ENCODE measurements at regions of chr14 and their contacts with region 1.

Region 1: GRCh38 chr14:22131749-22132476 is 457.1 kb downstream of the DAD1 start:
- DNase-seq: peak in 1 of 2 experiments; percentile 78
- H3K4me3 ChIP-seq: no peak overlapping the region
- H3K27ac ChIP-seq: no peak overlapping the region
- H3K4me1 ChIP-seq: no peaks in the 10 kb centered on the region
- H3K27me3 ChIP-seq: no peaks in the 10 kb centered on the region
- CTCF ChIP-seq: peak; percentile 41 to 73 (median 55)
- EP300 ChIP-seq: no peak
- POLR2A ChIP-seq: no peak
- RAD21 ChIP-seq: peak; percentile 30 to 46; a peak in 3 of 4 replicates

Region 2: GRCh38 chr14:22147704-22148103 is 15.8 kb after region 1 on chr14:
- CTCF ChIA-PET with region 1: interaction called, 15 read pairs
- POLR2A ChIA-PET with region 1: no interaction called
- DNase-seq: no peak
- H3K4me3 ChIP-seq: no peak overlapping the region
- H3K27ac ChIP-seq: no peak overlapping the region
- H3K4me1 ChIP-seq: no peaks in the 10 kb centered on the region
- H3K27me3 ChIP-seq: no peaks in the 10 kb centered on the region
- CTCF ChIP-seq: no peak
- EP300 ChIP-seq: no peak
- POLR2A ChIP-seq: no peak
- RAD21 ChIP-seq: no peak

Measured in H1 (cell line).